Naive thymus-derived CD8-positive, alpha-beta T cell (primary cell): ENCODE measurements at regions of chr3 and their contacts with region 1.

Region 1: DNA sequence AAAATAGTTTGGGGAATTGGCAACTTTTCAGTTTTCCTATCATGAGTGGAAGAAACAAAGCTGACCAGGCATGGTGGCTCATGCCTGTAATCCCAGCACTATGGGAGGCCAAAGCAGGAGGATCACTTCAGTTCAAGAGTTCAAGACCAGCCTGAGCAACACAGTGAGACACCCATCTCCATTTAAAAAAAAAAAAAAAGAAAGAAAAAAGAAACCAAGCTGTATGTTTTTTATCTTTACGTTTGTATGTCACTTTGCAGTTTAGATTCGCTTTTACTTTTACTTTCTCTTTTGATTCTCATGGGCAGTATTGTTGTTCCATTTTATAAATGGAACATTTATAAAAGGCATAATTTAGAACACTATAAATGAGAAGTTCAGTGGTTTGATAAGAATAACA is 31.2 kb upstream of the TNIK start:
- DNase-seq: peak in 3 of 10 donors; percentile 23 to 52 (median 47)
- ATAC-seq: peak; percentile 13 to 39
- H3K4me3 Mint-ChIP-seq: peak overlapping the region; percentile 51 to 78 (median 70)
- H3K27ac Mint-ChIP-seq: peak overlapping the region; percentile 8 to 95 (median 76)
- H3K4me1 Mint-ChIP-seq: peaks cover 19 to 51% (median 43%) of the 10 kb centered on the region in 4 donors
- H3K27me3 Mint-ChIP-seq: no peaks in the 10 kb centered on the region

Region 2: DNA sequence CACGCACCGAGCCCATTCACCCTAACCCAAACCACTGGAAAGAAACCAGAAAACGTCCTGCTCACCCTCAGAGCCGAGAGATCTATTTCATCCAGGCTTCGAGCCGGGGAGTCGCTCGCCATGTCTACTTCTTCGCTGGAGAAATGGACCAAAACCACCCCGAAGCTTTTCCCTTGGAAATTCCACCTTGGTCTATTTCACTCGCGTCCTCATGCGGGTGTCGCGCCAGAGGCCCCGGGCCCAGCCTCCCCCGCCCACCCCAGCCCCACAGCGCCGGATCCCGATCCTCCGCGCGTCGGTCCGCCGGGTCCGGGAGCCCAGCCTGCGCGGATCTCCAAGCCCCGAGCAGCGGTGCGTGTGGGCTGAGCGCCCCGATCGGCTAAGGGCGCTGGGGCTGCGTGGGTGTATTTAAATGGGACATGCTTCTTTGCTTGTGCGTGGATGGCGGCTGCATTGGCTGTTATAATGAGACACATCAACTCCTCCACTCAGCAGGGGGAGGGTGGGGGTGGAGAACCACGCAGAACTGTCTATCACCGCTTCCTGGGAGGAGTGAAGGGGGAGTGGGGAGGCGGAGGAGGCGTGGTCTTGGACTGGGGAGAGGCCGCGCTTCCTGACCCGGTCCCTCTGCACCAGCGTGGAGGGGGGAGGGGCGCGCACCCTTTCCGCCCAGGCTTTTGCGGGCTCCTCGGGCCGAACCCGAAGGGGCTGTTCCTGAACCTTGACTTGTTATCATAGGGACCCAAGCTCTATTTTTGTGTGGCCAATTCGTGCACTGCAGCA is 31.2 kb before region 1 on chr3 and contains the start of gene TNIK:
- POLR2A ChIA-PET with region 1: interaction called, 28 read pairs
- DNase-seq: peak; percentile 84 to 98 (median 93)
- ATAC-seq: peak; percentile 79 to 80
- H3K4me3 Mint-ChIP-seq: peak within 1 kb of the TSS; percentile 91 to 98 (median 93)
- H3K27ac Mint-ChIP-seq: peak within 1 kb of the TSS; percentile 88 to 98 (median 95)
- H3K4me1 Mint-ChIP-seq: peaks cover 26 to 55% (median 47%) of the 10 kb centered on the region in 4 donors
- H3K27me3 Mint-ChIP-seq: no peaks in the 10 kb centered on the region
- polyA plus RNA-seq, gene TNIK: 13.2 to 16.1 (median 13.8) TPM

Region 3: DNA sequence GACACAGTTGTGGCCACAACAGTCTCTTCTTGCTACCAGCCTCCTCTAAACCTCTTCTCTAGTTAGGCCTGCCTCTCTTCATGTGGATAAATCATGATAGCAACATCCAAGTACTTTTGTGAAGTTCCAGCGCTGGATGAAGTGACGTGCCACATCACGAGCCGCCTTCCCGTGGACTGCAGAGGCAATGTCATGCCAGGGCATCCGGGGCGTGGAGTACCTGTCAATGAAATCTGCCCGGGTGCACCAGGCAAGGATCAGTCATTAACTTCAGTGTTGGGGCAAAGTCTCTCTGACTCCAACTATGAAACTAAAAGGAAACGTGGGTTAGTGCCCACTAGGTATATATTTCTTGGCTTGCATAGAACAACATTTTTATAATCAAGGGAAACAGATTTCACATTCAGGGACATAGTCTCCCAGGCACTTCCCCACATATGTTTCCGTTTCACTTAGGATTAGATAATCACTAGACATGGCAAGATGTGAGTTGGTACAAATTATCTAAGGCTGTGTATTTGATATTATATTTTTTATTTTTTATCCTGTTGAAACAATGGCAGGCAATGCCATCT is 185.3 kb after region 1 on chr3:
- POLR2A ChIA-PET with region 1: no interaction called
- DNase-seq: no peak
- ATAC-seq: no peak
- H3K4me3 Mint-ChIP-seq: no peak overlapping the region
- H3K27ac Mint-ChIP-seq: peak overlapping the region in 1 of 10 donors; percentile 25
- H3K4me1 Mint-ChIP-seq: peaks cover 0 to 1% (median 0%) of the 10 kb centered on the region in 4 donors
- H3K27me3 Mint-ChIP-seq: peaks cover 0 to 3% (median 0%) of the 10 kb centered on the region in 5 donors

Region 4: GRCh38 chr3:171936191-171936841 is 445.0 kb after region 1 on chr3:
- POLR2A ChIA-PET with region 1: no interaction called
- DNase-seq: no peak
- ATAC-seq: no peak
- H3K4me3 Mint-ChIP-seq: no peak overlapping the region
- H3K27ac Mint-ChIP-seq: no peak overlapping the region
- H3K4me1 Mint-ChIP-seq: peaks cover 0 to 3% (median under 1%) of the 10 kb centered on the region in 4 donors
- H3K27me3 Mint-ChIP-seq: peaks cover 0 to 3% (median 2%) of the 10 kb centered on the region in 5 donors